ENCODE measurements at regions of chr3 and their contacts with region 1.

Region 1: GRCh38 chr3:185659942-185660921 is 74.1 kb downstream of the SENP2 start:
- DNase-seq: peak; percentile 24 to 72 (median 59)
- ATAC-seq: peak; percentile 64
- H3K4me3 ChIP-seq: no peak overlapping the region
- H3K4me3 Mint-ChIP-seq: no peak overlapping the region
- H3K27ac ChIP-seq: no peak overlapping the region
- H3K27ac Mint-ChIP-seq: no peak overlapping the region
- H3K4me1 ChIP-seq: peaks cover 3% of the 10 kb centered on the region
- H3K4me1 Mint-ChIP-seq: no peaks in the 10 kb centered on the region
- H3K27me3 ChIP-seq: no peaks in the 10 kb centered on the region
- H3K27me3 Mint-ChIP-seq: peaks cover 12% of the 10 kb centered on the region
- CTCF ChIP-seq: peak; percentile 89

Region 2: DNA sequence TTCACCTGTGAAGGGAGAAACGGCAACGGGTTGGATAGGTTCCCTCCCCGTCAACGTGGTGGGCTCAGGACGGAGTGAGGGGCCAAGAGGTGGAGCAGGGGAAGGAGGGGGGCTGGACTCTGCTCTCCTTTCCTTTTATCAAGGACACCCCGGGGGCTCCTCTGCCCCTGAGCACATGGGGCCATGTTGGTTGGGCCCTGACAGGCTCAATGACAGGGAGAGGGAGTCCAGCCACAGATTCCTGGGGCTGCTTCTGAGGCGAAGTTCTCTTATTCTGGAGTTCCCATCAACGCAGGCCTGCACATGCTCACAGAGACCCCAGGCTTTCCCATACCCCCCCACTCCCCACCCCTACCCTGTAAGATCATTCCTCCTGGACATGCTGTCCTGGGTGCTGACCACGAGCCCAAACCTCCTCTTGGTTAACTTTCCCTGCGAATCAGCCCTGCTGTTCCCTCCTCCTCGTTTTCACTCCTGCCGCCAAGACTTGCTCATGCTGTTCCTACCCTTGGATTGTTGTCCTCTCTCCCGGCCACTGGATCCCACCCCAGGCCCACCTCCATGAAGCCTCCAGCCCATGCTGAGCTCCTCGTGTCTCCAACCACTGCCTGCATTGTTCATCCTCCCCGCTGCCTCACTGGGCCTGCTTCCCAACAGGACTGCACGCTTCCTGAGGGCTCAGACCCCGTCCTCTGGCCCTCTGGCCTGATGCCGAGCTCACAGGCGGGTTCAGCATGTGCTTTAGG is 12.9 kb before region 1 on chr3:
- CTCF ChIA-PET with region 1: interaction called, 12 read pairs
- POLR2A ChIA-PET with region 1: no interaction called
- intact Hi-C with region 1: no loop called
- DNase-seq: no peak
- ATAC-seq: no peak
- H3K4me3 ChIP-seq: no peak overlapping the region
- H3K4me3 Mint-ChIP-seq: no peak overlapping the region
- H3K27ac ChIP-seq: no peak overlapping the region
- H3K27ac Mint-ChIP-seq: no peak overlapping the region
- H3K4me1 ChIP-seq: no peaks in the 10 kb centered on the region
- H3K4me1 Mint-ChIP-seq: no peaks in the 10 kb centered on the region
- H3K27me3 ChIP-seq: no peaks in the 10 kb centered on the region
- H3K27me3 Mint-ChIP-seq: peaks cover 16% of the 10 kb centered on the region
- CTCF ChIP-seq: no peak

Region 3: DNA sequence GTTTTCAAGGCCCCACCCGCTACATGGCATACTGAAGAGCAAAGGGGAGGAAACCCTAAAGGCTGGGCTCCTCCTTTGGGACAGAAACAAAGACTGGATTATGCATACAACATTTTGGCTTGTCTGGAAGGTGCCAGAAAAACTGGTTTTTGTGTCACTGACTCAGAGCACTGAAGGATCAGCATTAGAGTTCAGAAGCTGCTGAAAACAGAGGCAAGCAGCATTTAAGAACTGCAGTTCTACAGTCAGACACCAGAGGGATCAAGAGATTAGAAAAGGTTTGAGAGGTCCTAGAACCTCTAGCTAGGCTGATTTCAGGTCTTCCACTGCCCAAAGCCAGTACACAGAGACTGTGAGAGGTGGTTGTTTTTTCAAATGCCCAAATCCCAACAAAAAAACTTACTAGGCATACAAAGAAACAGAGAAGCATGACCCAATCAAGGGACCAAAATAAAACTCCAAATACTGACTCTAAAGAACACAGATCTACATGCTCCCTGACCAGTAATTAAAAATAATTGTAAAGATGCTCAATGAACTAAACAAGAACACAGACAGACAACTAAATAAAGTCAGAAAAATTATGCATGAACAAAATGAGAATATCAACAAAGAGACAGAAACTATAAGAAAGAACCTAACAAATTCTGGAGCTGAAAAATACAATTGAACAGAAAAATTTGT is 17.1 kb after region 1 on chr3:
- CTCF ChIA-PET with region 1: interaction called, 17 read pairs
- POLR2A ChIA-PET with region 1: no interaction called
- intact Hi-C with region 1: no loop called
- DNase-seq: peak in 1 of 9 experiments; percentile 4
- ATAC-seq: no peak
- H3K4me3 ChIP-seq: no peak overlapping the region
- H3K4me3 Mint-ChIP-seq: no peak overlapping the region
- H3K27ac ChIP-seq: no peak overlapping the region
- H3K27ac Mint-ChIP-seq: no peak overlapping the region
- H3K4me1 ChIP-seq: no peaks in the 10 kb centered on the region
- H3K4me1 Mint-ChIP-seq: no peaks in the 10 kb centered on the region
- H3K27me3 ChIP-seq: no peaks in the 10 kb centered on the region
- H3K27me3 Mint-ChIP-seq: peaks cover 2% of the 10 kb centered on the region
- CTCF ChIP-seq: no peak

Region 4: GRCh38 chr3:185887066-185887465 is 226.8 kb after region 1 on chr3:
- CTCF ChIA-PET with region 1: no interaction called
- POLR2A ChIA-PET with region 1: no interaction called
- intact Hi-C with region 1: no loop called
- DNase-seq: no peak
- ATAC-seq: no peak
- H3K4me3 ChIP-seq: no peak overlapping the region
- H3K4me3 Mint-ChIP-seq: no peak overlapping the region
- H3K27ac ChIP-seq: no peak overlapping the region
- H3K27ac Mint-ChIP-seq: no peak overlapping the region
- H3K4me1 ChIP-seq: no peaks in the 10 kb centered on the region
- H3K4me1 Mint-ChIP-seq: no peaks in the 10 kb centered on the region
- H3K27me3 ChIP-seq: no peaks in the 10 kb centered on the region
- H3K27me3 Mint-ChIP-seq: peaks cover 2% of the 10 kb centered on the region
- CTCF ChIP-seq: no peak

Measured in CD8-positive, alpha-beta T cell (primary cell).